Mammary epithelial cell (primary cell): ENCODE measurements at regions of chr3 and their contacts with region 1.

Region 1: DNA sequence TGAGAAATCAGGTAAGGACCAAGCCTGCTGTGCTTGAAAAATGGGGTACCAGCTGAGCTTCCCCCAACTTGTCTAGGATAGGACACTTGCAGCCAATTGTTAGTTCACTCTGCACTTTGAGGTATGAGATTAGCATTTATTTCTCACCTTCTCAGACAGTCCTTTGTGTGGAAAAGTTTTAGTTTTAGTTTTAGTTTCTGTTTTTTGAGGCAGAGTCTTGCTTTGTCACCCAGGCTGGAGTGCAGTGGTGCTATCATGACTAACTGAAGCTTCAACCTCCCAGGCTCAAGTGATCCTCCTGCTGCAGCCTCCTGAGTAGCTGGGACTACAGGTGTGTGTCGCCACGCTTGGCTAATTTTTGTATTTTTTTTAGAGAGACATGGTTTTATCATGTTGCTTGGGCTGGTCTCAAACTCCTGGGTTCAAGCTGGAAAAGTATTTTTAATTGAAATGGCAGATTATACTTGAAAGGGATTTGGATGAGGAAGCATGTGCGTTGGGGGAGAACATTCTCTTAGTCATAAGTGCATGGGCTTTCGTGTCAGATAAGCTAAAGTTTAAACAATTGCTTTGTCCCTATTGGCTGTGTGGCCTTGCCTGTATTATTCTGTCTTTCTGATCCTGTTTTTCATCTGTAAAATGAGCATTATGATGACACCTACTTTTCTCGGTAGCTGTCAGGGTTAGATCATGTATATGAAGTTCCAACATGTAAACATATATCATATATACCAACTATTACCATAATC is 25.2 kb upstream of the CCK start:
- DNase-seq: no peak
- H3K4me3 ChIP-seq: no peak overlapping the region
- H3K27ac ChIP-seq: no peak overlapping the region
- H3K4me1 ChIP-seq: no peaks in the 10 kb centered on the region
- H3K27me3 ChIP-seq: no peaks in the 10 kb centered on the region
- CTCF ChIP-seq: no peak

Region 2: GRCh38 chr3:42369304-42369703 is 78.2 kb after region 1 on chr3:
- CTCF ChIA-PET with region 1: no interaction called
- dilution Hi-C with region 1: no loop called
- in situ Hi-C with region 1: no loop called
- intact Hi-C with region 1: loop called (anchors 10 kb)
- DNase-seq: no peak
- H3K4me3 ChIP-seq: no peak overlapping the region
- H3K27ac ChIP-seq: no peak overlapping the region
- H3K4me1 ChIP-seq: no peaks in the 10 kb centered on the region
- H3K27me3 ChIP-seq: no peaks in the 10 kb centered on the region
- CTCF ChIP-seq: no peak